ENCODE measurements at regions of chr9 and their contacts with region 1.

Region 1: DNA sequence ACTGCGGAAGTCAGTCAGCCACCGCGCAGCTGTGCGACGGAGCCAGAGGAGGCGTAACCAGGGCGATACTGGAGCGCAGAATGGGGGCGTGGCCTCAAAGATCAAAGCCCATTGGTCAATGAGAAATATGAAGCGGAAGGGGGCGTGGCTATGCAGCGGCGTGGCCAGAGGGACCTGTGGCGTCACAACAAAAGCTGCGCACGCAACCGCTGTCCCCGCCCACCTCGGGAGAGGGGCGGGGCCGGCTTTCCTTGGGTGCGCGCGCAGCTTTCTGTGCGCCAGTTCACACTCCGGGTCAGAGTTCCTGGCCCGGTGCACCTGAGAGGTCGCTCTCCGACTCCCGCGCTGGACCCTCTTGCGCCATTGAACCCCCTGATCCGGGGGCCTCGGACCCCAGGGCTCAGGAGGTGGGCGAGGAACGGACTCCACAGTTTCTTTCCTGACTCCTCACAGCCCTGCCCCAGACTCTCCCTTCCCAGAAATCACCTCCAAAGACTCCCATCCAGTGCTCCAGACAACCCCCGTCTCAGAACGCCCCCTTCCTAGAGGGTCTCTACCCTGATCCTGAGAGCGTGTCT is at the starts of genes GOLGA2 and SWI5:
- DNase-seq: peak; percentile 100
- total RNA-seq, gene GOLGA2: 120 TPM
- total RNA-seq, gene SWI5: 17.7 TPM

Region 2: DNA sequence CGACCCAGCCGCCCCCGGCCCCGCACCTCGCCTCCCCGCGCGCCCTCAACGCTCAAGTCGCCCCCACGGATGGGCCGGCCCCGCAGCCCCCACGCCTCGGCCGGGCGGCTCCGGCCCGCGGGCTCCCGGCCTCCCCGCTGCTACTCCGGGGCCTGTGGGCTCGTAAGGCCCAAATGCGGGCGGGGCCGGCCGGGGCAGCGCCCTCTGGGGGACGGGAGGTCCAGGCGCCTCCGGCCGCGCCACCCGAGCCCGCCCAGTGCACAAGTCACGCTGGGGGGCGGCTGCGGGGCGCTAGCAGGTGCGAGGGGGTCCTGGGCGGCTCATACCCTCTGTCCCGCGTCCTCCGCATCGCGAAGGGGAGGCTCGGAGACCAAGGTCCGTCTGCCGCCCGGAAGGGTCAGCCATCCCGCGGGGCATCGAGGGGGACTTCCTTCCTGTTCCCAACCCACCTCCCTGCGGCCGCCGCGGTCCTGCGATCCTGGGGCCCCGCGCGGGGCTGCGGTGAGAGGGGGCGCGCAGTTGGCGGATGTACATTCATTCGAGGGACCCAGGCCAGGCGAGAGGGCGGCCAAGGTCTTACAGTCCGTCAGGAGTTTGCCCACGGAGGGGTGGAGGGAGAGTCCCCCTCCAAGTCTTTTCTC is 84.6 kb before region 1 on chr9 and contains the start of gene CIZ1:
- intact Hi-C with region 1: loop called (anchors 10 kb)
- DNase-seq: peak; percentile 91
- total RNA-seq, gene CIZ1: 86.1 TPM

Region 3: GRCh38 chr9:128322404-128323211 is 46.5 kb after region 1 on chr9 and contains the starts of genes COQ4 and TRUB2:
- intact Hi-C with region 1: loop called (anchors 5 kb)
- DNase-seq: peak; percentile 95
- total RNA-seq, gene COQ4: 25.9 TPM
- total RNA-seq, gene TRUB2: 30.7 TPM

Region 4: DNA sequence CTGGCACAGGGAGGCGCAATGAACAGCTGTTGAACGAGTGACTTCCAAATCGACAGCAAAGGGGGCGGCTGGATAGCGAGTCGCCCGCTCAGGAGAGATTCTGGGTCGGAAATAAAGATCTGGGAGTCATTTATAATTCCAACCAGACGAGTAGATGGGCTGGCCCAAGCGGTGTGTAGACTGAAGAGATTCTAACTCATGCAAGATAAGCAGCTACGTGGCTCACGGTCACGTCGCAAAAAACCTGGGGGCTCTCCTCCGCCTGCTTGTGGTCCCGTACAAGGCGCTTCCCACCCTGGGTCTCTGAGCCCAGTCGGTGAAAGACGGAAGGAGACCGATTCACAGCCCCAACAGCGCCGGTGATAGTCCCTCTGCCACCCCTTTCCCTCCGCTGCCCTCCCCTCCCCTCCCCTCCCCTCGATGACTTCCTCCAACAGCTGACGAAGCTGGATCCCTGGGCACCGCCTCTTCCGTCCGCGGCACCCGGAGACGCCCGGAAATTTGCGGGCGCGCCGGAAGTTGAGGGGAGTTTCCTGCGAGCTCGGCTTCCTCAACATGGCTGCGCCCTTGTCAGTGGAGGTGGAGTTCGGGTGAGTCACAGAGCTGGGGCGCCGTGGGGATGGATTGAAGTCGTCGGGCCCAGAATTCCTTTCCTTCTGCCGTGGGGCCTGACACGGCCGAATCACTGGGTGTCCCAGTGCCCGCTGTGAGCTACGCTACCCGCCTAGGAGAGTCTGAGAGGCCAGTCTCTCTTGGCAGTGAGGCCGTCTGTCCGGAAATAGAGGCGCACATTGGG is 94.9 kb after region 1 on chr9 and contains the start of gene URM1:
- intact Hi-C with region 1: no loop called
- DNase-seq: peak; percentile 98
- total RNA-seq, gene URM1: 49.5 TPM

Measured in cardiac septum (tissue), 1 donor.